SK-N-SH (cell line): ENCODE measurements at regions of chr2 and their contacts with region 1.

Region 1: DNA sequence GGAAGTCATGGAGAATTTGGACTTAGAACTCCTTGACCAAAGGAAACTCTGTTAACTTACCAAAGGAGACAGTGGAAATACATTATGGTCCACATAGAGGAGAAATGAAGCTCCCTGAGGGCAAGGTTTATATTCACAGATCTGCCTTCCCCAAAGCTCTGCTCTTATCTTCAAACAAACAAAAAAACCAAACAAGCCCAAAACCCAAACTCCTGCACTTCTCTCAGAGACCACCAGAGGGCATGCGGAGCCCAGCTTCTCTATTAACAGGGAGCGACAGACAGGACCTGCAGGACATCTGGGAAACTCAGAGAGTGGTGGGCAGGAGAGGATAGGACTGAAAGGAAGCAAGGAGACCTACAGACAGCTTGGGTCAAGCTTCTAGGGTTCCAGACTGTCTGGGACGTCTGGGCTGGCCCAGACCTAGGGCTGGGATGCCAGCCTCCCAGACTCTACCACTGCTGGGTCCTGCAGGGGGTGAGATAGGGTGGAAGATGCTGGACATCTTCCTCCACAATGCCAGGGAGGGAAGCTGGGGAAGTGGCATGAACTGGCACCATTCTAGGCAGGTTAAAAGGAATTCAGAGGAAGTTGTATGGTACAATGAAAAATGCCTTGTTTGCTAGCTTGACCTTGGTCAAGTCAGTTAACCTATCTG is 4.0 kb upstream of the WNT10A start:
- DNase-seq: peak; percentile 88
- H3K4me3 ChIP-seq: no peak overlapping the region
- H3K27ac ChIP-seq: peak overlapping the region in 1 of 2 experiments; percentile 78; a peak in 2 of 4 replicates
- H3K4me1 ChIP-seq: peaks cover 0 to 54% of the 10 kb centered on the region in 2 experiments; a peak in 2 of 4 replicates
- H3K27me3 ChIP-seq: peaks cover 39% of the 10 kb centered on the region
- CTCF ChIP-seq: peak; percentile 95
- EP300 ChIP-seq: peak in 1 of 2 experiments; percentile 26; a peak in 1 of 4 replicates
- RAD21 ChIP-seq: peak; percentile 95

Region 2: GRCh38 chr2:218892693-218893348 is 16.1 kb after region 1 on chr2:
- CTCF ChIA-PET with region 1: interaction called, 795 read pairs
- POLR2A ChIA-PET with region 1: interaction called, 20 read pairs
- DNase-seq: peak; percentile 92
- H3K4me3 ChIP-seq: peak overlapping the region; percentile 39 to 57; a peak in 3 of 4 replicates
- H3K27ac ChIP-seq: no peak overlapping the region
- H3K4me1 ChIP-seq: peaks cover 0 to 26% of the 10 kb centered on the region in 2 experiments; a peak in 2 of 4 replicates
- H3K27me3 ChIP-seq: peaks cover 39% of the 10 kb centered on the region
- CTCF ChIP-seq: peak; percentile 48
- EP300 ChIP-seq: no peak
- RAD21 ChIP-seq: peak; percentile 34

Region 3: GRCh38 chr2:218898109-218898878 is 21.6 kb after region 1 on chr2:
- CTCF ChIA-PET with region 1: interaction called, 795 read pairs
- POLR2A ChIA-PET with region 1: interaction called, 20 read pairs
- DNase-seq: peak; percentile 94
- H3K4me3 ChIP-seq: peak overlapping the region; percentile 25 to 33; a peak in 2 of 4 replicates
- H3K27ac ChIP-seq: no peak overlapping the region
- H3K4me1 ChIP-seq: peaks cover 0 to 25% of the 10 kb centered on the region in 2 experiments; a peak in 1 of 4 replicates
- H3K27me3 ChIP-seq: peaks cover 46% of the 10 kb centered on the region
- CTCF ChIP-seq: peak; percentile 92
- EP300 ChIP-seq: no peak
- RAD21 ChIP-seq: peak; percentile 81

Region 4: DNA sequence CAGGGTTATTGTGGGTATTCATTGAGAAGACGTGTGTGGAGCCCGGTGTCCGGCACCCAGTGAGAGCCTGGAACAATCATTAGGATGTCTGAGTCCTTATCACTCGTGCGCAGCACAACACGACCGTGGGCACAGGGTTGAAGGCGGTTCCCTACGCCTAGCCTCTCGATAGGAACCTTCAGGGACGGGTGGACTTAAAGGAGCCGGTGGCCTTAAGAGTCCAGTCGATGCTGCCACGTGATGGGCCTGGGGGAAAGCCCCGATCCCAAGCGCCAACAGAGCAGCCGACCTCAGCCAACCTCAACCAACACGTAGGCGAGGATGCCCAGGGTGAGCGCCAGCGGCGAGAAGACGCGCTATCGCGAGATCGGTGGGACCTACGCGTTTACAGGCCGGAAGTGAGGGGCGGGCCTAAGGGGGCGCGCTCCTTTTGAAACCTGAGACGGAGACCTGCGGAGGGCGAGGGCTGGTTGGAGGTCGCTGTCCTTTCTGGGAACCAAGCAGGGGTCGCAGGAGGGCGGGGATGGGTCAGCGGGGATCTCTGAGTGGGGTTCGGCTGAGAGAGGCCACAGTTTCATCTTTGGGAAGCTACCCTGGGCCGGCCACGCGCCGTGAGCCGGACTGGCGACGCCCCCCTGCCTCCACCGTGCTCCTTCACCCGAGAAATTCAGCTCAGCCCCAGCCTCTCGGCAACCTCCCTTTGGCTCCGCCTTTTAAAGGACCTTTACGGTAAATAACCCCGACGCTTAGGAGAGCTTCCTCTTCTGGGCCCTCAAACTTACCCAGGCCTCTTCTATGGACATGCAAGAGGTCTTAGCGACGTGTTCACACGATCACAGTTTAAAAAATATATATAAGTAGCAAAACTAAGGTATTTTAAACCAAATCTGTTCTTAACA is 32.3 kb after region 1 on chr2:
- CTCF ChIA-PET with region 1: interaction called, 80 read pairs
- POLR2A ChIA-PET with region 1: interaction called, 3 read pairs
- DNase-seq: peak; percentile 93
- H3K4me3 ChIP-seq: peak overlapping the region; percentile 60 to 61
- H3K27ac ChIP-seq: peak overlapping the region in 1 of 2 experiments; percentile 84; a peak in 2 of 4 replicates
- H3K4me1 ChIP-seq: peaks cover 10 to 11% of the 10 kb centered on the region in 2 experiments
- H3K27me3 ChIP-seq: no peaks in the 10 kb centered on the region
- CTCF ChIP-seq: no peak
- EP300 ChIP-seq: no peak
- RAD21 ChIP-seq: no peak

Region 5: DNA sequence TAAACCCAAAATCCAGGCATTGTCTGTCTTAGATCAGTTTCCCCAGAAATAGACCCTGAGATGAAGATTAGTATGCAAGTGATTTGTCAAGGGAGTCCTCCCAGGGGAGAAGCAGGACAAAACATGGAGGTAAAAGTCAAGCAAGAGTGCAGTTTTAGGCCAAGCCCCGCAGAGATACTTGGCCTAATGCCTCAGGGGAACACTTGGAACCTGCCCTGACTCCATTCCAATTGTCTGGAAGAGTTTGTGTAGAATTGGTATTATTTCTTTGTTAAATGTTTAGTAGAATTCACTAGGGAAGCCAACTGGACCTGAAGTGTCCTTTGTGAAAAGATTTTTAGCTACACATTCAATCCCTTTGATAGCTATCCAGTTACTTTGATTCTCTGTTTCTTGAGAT is 38.3 kb after region 1 on chr2:
- CTCF ChIA-PET with region 1: interaction called, 80 read pairs
- POLR2A ChIA-PET with region 1: no interaction called
- DNase-seq: no peak
- H3K4me3 ChIP-seq: no peak overlapping the region
- H3K27ac ChIP-seq: no peak overlapping the region
- H3K4me1 ChIP-seq: peaks cover 0 to 4% of the 10 kb centered on the region in 2 experiments
- H3K27me3 ChIP-seq: no peaks in the 10 kb centered on the region
- CTCF ChIP-seq: no peak
- EP300 ChIP-seq: no peak
- RAD21 ChIP-seq: no peak

Region 6: GRCh38 chr2:218959141-218959731 is 82.5 kb after region 1 on chr2 and contains the start of gene CDK5R2:
- CTCF ChIA-PET with region 1: interaction called, 19 read pairs
- POLR2A ChIA-PET with region 1: interaction called, 7 read pairs
- DNase-seq: peak; percentile 98
- H3K4me3 ChIP-seq: peak within 1 kb of the TSS; percentile 60 to 63
- H3K27ac ChIP-seq: peak within 1 kb of the TSS in 1 of 2 experiments; percentile 94; a peak in 2 of 4 replicates
- H3K4me1 ChIP-seq: peaks cover 8 to 47% of the 10 kb centered on the region in 2 experiments; a peak in 2 of 4 replicates
- H3K27me3 ChIP-seq: peaks cover 41% of the 10 kb centered on the region
- CTCF ChIP-seq: no peak
- EP300 ChIP-seq: peak in 1 of 2 experiments; percentile 32; a peak in 1 of 4 replicates
- RAD21 ChIP-seq: no peak
- polyA plus RNA-seq, gene CDK5R2: 0.19 and 0.26 TPM in 2 replicates

Region 7: GRCh38 chr2:218995972-218996711 is 119.5 kb after region 1 on chr2:
- CTCF ChIA-PET with region 1: interaction called, 33 read pairs
- POLR2A ChIA-PET with region 1: interaction called, 3 read pairs
- DNase-seq: peak; percentile 96
- H3K4me3 ChIP-seq: peak overlapping the region; percentile 57 to 61
- H3K27ac ChIP-seq: peak overlapping the region in 1 of 2 experiments; percentile 99; a peak in 2 of 4 replicates
- H3K4me1 ChIP-seq: peaks cover 0 to 61% of the 10 kb centered on the region in 2 experiments; a peak in 2 of 4 replicates
- H3K27me3 ChIP-seq: no peaks in the 10 kb centered on the region
- CTCF ChIP-seq: peak; percentile 85
- EP300 ChIP-seq: 0 out of 4 replicates have a peak, but pooled peaks of 1 of the 2 experiments have one; percentile 24
- RAD21 ChIP-seq: peak; percentile 96

Region 8: GRCh38 chr2:219087361-219087760 is 210.7 kb after region 1 on chr2:
- CTCF ChIA-PET with region 1: no interaction called
- POLR2A ChIA-PET with region 1: no interaction called
- DNase-seq: no peak
- H3K4me3 ChIP-seq: no peak overlapping the region
- H3K27ac ChIP-seq: no peak overlapping the region
- H3K4me1 ChIP-seq: no peaks in the 10 kb centered on the region
- H3K27me3 ChIP-seq: no peaks in the 10 kb centered on the region
- CTCF ChIP-seq: no peak
- EP300 ChIP-seq: no peak
- RAD21 ChIP-seq: no peak